GM18951 (cell line): ENCODE measurements at regions of chr15 and their contacts with region 1.

Region 1: GRCh38 chr15:57306161-57306943 is 70.0 kb upstream of the CGNL1 start:
- POLR2A ChIP-seq: no peak

Region 2: GRCh38 chr15:56491110-56491722 is 815.1 kb before region 1 on chr15:
- in situ Hi-C with region 1: loop called (anchors 25 kb)
- POLR2A ChIP-seq: no peak

Region 3: DNA sequence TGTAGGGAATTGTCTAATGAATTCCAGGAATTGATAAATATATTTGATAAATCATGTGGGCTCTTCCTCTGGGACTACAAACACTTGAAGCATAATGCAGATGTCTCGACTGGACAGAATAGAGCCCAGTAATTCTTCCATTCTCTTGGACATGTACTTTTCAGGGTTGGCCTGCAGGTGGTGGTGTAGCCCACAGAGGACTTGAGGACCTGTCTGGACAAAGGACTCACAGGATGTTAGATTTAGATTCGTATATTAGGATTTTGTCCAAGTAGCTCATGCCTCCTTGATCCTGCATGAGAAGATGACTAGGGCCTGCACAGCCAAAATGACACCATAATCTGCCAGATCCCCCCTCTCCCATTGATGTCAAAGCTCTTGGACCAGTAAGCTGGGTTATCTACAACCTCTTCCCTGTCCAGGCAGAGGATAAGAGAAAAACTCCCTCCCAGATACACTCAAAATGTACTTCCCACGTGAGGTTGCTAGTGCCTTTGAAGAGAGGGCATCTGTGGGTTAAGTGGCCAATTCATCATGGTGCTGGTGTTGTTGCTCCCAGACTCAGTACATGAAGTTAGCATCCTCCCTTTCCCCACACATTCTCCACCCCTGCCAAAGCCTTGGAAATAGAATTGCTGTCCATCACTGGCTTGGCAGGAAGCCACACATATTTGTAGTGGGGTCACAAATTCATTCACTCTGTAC is 484.5 kb before region 1 on chr15:
- in situ Hi-C with region 1: loop called (anchors 25 kb)
- POLR2A ChIP-seq: no peak

Region 4: GRCh38 chr15:57017024-57017423 is 289.3 kb before region 1 on chr15:
- in situ Hi-C with region 1: loop called (anchors 25 kb)
- POLR2A ChIP-seq: no peak

Region 5: DNA sequence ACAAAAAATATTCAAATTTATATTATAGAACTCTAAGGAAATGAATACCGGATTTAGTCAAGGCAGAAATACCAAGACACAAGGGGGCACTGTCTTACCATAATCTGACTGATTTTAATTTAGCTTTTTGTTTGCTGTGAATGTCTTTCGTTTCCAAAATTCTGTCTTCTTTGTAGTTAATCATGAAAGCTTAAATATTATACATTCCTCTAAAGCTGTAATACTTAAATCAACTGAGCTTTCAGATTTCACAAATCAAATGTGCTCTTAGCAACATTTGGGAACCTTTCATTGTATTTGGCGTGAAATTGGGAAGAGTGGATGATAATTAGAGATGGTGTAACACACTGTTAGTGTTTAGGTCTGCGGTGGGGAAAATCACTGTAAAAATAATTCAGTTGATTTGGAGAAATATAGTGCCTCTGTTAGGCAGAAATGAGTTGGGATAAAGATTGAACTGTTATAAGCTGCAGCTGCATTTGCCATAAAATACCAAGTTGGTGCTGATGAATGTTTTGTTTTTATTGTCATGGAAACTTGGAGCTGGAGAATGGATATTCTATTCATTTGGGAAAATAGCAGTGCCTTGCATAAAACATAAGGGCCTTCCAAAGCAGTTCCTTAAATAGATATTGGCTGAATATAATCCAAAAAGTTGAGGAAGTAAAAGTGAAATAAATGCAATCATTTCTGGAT is 159.7 kb before region 1 on chr15:
- in situ Hi-C with region 1: loop called (anchors 5 kb)
- POLR2A ChIP-seq: no peak

Region 6: GRCh38 chr15:57213862-57214261 is 92.5 kb before region 1 on chr15:
- in situ Hi-C with region 1: loop called (anchors 10 kb)
- POLR2A ChIP-seq: no peak